ENCODE measurements at regions of chr7 and their contacts with region 1.

Region 1: GRCh38 chr7:51430480-51431086 is 114.0 kb upstream of the COBL start:
- DNase-seq: peak; percentile 68
- H3K4me3 ChIP-seq: no peak overlapping the region
- H3K27ac ChIP-seq: no peak overlapping the region
- H3K4me1 ChIP-seq: no peaks in the 10 kb centered on the region
- H3K27me3 ChIP-seq: no peaks in the 10 kb centered on the region
- CTCF ChIP-seq: peak; percentile 83

Region 2: GRCh38 chr7:51315393-51316261 is 115.0 kb before region 1 on chr7:
- intact Hi-C with region 1: no loop called
- DNase-seq: peak; percentile 78
- H3K4me3 ChIP-seq: peak overlapping the region; percentile 58
- H3K27ac ChIP-seq: peak overlapping the region; percentile 66
- H3K4me1 ChIP-seq: no peaks in the 10 kb centered on the region
- H3K27me3 ChIP-seq: peaks cover 4% of the 10 kb centered on the region
- CTCF ChIP-seq: no peak

Region 3: DNA sequence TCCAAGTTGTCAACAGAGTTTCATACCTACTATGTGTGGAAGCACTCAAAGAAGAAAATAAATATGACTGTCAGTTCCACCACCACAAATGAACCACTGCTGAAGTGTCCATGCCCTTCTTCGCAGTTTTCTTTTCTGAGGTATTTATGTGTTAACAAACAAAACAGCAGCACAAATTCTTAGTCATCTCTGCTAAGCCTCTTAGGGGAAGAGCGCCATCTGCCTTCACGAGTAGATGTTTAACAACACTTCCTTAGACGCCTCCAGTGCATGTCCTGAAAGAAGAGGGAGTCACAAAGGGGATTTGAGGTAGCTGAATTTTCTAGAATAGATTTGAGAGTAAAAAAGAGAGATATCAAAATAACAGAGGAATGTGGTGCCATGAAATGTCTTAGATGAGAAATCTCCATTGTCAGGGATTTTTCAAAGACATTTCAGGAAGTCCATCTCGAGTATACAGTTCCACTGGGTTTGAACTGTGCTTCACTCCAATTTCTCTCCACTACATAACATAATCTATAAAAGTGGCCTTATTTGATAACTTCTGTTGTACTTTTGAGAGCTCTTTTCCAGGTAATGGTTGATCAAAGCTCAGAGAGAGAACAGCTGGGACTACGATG is 829.6 kb after region 1 on chr7:
- intact Hi-C with region 1: loop called (anchors 5 kb)
- DNase-seq: no peak
- H3K4me3 ChIP-seq: no peak overlapping the region
- H3K27ac ChIP-seq: no peak overlapping the region
- H3K4me1 ChIP-seq: no peaks in the 10 kb centered on the region
- H3K27me3 ChIP-seq: no peaks in the 10 kb centered on the region
- CTCF ChIP-seq: no peak